HEK293T (cell line): ENCODE measurements at regions of chr19 and their contacts with region 1.

Region 1: DNA sequence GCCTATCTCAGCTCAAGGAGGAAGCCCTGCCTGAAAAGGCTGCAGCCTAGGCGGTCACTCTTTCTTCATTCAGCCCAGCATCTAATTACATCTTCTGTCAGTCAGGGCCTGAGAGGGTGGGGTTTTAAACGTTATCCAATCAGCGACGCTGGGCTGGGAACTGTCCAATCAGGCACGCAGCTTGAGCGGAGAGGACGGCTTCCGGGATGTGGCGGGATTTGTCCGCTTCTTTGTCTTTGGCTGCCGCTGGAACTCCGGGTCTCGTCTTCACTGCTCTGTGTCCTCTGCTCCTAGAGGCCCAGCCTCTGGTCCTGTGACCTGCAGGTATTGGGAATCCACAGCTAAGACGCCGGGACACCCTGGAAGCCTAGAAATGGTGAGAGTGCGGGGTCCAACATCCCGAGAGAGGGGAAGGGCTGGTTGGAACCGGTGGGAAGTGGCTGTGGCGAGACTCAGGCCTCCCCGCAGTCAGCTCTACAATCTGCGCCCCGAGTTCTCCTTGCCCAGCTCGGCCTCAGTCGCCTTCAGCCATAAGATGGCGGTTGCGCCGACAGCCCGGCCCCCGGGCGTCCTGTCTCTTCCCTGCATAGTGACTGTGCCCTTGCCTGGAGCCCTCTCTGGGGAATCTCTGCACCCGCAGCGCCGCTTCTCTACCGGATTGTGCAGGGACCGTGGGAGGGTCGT is at the start of gene ZNF738:
- DNase-seq: peak; percentile 78

Region 2: GRCh38 chr19:21328885-21329605 is 29.9 kb before region 1 on chr19 and contains the start of gene ZNF708:
- CTCF ChIA-PET with region 1: interaction called, 3 read pairs
- POLR2A ChIA-PET with region 1: interaction called, 16 read pairs
- DNase-seq: peak; percentile 81

Region 3: GRCh38 chr19:21398851-21399250 is 39.9 kb after region 1 on chr19:
- CTCF ChIA-PET with region 1: no interaction called
- POLR2A ChIA-PET with region 1: no interaction called
- DNase-seq: no peak

Region 4: DNA sequence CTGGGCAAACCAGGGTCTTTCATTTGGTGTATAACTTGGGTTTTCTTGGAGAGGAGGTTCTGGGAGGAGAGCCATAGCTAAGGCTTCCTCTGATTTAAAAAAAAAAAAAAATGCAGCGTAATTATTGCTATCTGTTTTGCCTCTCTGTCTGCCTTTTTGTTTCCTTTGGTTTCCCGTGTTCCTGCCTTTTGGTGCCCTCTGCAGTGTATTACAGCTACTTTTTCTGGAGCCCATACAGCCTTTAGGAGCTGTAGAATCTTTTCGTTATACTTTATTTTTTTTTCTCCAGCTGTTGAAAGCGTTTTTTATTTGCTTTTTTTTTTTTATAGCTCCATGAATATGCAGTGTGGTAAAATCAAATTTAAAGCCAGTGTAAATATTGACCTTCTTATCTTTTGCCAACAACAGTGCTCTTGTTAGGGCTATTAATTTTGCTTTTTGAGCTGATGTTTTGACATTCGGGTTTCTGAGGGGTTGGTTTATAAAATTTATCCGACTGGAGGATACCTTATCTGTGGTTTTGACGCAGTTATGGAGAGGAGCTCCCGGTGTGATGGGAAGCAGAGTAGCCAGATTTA is 76.1 kb after region 1 on chr19:
- CTCF ChIA-PET with region 1: no interaction called
- POLR2A ChIA-PET with region 1: no interaction called
- DNase-seq: no peak